Posterior vena cava (tissue), 2 donors: ENCODE measurements at regions of chr10 and their contacts with region 1.

Region 1: GRCh38 chr10:72069751-72070526 is 18.4 kb downstream of the SPOCK2 start:
- DNase-seq: no peak

Region 2: GRCh38 chr10:71589617-71590551 is 480.1 kb before region 1 on chr10:
- intact Hi-C with region 1: loop called in 1 of 2 experiments (anchors 5 kb)
- DNase-seq: no peak